Right ventricle myocardium inferior (tissue), 1 donor: ENCODE measurements at regions of chr1 and their contacts with region 1.

Region 1: DNA sequence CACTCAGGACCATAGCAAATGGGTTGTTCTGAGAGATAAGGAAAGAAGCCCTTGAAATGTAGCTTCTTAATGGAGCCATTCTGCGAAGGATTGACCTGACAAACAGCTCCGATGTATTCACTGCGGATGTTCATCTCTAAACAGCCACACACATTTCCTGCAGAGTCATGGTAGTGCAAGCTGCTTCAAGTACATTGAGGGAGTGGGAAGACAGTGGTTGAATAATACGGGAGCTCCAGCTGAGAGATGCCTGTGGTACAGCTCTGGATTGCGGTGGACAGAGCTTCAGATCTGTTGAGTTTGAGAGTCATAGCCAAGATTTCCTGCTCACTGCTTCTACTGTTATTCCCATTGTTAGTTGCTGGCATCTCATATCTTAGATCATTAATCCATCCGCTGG is 86.6 kb downstream of the ZBTB18 start:
- DNase-seq: no peak
- ATAC-seq: no peak

Region 2: DNA sequence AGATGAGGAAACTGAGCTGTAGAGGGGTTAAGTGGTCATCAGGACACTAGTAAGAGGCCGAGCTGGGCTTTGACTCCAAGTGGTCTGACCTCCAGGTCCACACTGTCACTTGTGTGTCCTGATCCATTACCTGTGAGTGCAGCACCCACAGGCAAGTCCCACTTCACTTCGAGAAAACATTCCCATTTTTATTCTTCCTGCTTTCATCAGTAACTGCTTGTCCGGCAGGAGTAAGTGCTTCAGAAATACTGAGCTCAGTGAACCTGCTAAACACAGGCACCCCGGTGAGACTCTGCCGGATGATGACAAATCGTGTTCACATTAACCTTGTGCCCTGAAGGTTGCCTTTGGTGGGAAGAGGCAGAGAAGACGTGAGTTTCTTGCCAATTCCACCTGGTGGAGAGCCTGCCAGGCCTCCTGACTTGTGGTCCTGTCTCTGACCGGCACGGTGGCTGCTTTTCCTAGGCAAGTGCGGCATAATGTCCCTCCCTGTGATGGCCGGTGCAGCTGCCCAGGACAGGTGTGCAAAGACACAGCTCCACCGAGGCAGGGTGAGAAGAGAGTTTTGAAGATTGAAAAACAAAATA is 57.3 kb before region 1 on chr1:
- intact Hi-C with region 1: loop called (anchors 10 kb)
- DNase-seq: no peak
- ATAC-seq: no peak

Region 3: DNA sequence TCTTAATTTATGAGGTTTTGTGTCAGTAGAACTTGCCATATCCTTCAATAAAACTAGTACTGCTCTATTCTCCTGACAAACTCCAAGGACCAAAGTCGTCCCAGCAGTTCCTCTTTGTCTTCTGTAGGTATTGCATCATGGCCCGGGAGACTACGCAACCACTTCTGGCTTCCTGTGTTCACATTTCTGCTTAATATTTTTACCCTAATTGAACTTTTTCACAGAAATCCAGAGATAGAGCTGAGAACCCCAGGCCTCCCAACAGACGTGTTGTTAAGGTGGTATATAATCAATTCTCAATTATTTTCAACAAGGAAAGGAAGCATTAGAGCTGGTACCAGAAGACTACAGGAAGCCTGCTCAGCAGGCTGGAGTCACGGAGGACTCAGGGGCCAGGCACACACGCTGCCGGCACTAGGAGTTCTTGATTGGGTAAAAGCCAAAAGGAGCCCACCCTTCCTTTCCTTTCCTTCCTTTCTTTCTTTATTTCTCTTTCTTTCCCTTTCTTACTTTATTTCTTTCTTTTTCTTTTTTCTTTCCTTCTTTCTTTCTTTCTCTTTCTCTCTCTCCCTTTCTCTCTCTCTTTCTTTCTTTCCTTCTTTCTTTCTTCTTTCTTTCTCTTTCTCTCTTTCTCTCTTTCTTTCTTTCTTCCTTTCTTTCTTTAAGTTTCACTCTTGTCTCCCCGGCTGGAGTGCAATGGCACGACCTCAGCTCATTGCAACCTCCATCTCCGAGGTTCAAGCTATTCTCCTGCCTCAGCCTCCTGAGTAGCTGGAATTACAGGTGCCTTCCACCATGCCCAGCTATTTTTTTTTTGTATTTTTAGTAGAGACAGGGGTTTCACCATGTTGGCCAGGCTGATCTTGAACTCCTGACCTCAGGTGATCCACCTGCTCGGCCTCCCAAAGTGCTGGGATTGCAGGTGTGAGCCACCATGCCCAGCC is 87.0 kb after region 1 on chr1:
- intact Hi-C with region 1: no loop called
- DNase-seq: peak; percentile 86
- ATAC-seq: peak; percentile 34